ENCODE measurements at regions of chr5 and their contacts with region 1.

Region 1: DNA sequence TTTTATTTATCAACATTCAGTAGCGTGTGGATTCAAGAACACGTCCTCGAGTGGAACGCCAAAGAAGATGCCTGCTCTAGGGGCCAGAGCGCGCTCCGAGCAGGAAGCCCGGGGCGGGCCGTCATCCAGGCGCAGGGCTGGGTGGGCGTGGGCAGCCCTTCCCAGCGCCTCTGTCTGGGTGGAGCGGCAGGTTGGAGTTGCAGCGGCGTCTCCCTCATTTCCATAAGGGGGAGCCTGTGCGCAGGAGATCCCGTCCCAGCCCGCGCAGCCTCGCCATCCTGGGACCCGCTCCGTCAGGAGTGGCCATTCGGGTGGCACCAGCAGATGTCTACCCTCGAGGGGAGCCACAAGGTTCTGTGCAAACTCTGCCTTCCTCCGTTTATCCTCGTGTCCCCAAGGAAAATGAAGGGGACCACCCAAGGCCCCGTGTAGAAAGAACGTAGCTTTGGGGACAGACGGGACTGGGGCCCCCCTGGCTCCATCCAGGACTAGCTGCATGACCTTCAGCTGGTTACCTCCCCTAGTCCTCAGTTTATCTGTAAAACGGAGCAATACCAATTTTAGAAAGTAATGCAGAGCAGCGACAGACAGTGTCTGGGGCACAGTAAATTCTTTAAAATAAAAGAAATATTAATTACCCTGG is 155.5 kb upstream of the SMIM23 start:
- H3K4me3 ChIP-seq: no peak overlapping the region
- H3K27ac ChIP-seq: no peak overlapping the region
- H3K4me1 ChIP-seq: no peaks in the 10 kb centered on the region
- CTCF ChIP-seq: peak; percentile 80

Region 2: DNA sequence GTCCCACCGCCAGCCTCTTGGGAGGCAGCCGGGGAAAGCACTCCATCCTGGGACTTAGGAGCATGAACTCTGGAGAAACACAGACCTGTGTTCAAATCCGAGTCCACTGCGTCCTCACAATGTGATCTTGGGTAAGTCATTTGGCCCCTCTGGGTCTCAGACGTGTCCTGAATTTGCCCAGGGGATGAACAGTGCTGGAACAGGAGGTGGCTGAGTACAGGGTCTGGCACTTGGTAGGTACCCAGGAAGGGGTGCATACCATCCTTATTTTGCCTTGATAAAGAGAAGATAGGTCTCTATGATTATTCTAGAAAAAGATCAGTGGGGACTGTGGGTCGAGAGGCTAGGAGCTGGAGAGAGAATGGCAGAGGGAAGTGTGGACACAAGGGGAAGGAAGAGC is 75.0 kb before region 1 on chr5:
- CTCF ChIA-PET with region 1: no interaction called
- POLR2A ChIA-PET with region 1: no interaction called
- H3K4me3 ChIP-seq: no peak overlapping the region
- H3K27ac ChIP-seq: no peak overlapping the region
- H3K4me1 ChIP-seq: no peaks in the 10 kb centered on the region
- CTCF ChIP-seq: no peak

Region 3: DNA sequence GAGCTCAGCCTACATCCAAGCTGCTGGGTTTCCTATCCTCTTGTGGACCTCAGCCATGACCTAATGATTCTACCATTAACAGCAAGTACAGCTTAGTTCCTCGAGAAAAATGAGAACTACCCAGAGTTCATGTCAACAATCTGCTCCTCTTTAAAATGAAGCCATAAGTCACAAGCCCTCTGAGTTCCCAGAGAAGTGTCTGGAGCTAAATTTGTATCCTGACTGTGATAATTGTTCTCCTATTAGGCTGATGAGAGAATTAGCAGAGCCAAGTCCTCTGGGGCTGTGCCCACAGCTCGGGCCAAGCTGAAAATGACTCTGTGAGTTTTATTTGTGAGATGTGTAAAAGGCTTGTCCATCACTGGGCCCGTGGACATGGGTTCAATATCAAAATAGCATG is 10.3 kb after region 1 on chr5:
- CTCF ChIA-PET with region 1: interaction called, 11 read pairs
- POLR2A ChIA-PET with region 1: no interaction called
- H3K4me3 ChIP-seq: no peak overlapping the region
- H3K27ac ChIP-seq: no peak overlapping the region
- H3K4me1 ChIP-seq: no peaks in the 10 kb centered on the region; the same call in 1 of the 2 replicates
- CTCF ChIP-seq: no peak

Region 4: GRCh38 chr5:171667341-171668096 is 37.4 kb after region 1 on chr5:
- CTCF ChIA-PET with region 1: interaction called, 10 read pairs
- POLR2A ChIA-PET with region 1: no interaction called
- H3K4me3 ChIP-seq: no peak overlapping the region; the same call in 1 of the 2 replicates
- H3K27ac ChIP-seq: no peak overlapping the region
- H3K4me1 ChIP-seq: no peaks in the 10 kb centered on the region
- CTCF ChIP-seq: no peak

Region 5: GRCh38 chr5:171907725-171908343 is 277.7 kb after region 1 on chr5:
- CTCF ChIA-PET with region 1: interaction called, 13 read pairs
- POLR2A ChIA-PET with region 1: no interaction called
- H3K4me3 ChIP-seq: no peak overlapping the region
- H3K27ac ChIP-seq: no peak overlapping the region
- H3K4me1 ChIP-seq: no peaks in the 10 kb centered on the region
- CTCF ChIP-seq: peak; percentile 38; the same call in 1 of the 2 replicates